ENCODE measurements at regions of chr19 and their contacts with region 1.

Region 1: DNA sequence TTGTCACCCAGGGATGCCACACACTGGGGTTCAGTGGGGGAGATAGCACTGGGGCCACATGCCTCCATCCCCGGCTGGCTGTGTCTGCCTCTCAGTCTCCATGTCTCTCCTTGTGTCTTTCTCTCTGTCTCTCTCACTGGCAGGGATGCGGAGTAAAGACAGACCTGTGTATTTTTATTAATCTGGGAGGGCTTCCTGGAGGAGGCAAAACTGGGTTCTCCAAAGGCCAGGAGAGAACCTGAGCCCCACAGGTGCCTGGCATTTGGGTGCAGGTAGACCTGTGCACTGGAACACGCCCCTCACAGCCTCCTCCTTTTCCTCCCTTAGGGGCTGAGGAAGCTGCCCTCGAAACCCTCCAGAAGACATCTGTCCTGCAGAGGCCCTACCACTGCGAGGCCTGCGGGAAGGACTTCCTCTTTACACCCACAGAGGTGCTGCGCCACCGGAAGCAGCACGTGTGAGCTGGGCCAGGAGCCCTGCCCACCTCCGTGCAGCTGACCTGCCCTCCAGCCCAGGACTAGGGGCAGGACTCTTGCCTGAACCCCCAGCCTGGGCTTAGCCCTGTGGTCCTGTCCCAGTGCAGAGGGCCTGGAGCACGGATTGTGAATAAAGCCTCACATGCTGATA is 32.7 kb downstream of the DHX34 start:
- DNase-seq: peak in 1 of 4 donors; percentile 17
- ATAC-seq: no peak
- H3K4me3 ChIP-seq: no peak overlapping the region
- H3K27ac ChIP-seq: no peak overlapping the region
- H3K4me1 ChIP-seq: no peaks in the 10 kb centered on the region
- H3K27me3 ChIP-seq: no peaks in the 10 kb centered on the region
- CTCF ChIP-seq: no peak
- POLR2A ChIP-seq: no peak

Region 2: DNA sequence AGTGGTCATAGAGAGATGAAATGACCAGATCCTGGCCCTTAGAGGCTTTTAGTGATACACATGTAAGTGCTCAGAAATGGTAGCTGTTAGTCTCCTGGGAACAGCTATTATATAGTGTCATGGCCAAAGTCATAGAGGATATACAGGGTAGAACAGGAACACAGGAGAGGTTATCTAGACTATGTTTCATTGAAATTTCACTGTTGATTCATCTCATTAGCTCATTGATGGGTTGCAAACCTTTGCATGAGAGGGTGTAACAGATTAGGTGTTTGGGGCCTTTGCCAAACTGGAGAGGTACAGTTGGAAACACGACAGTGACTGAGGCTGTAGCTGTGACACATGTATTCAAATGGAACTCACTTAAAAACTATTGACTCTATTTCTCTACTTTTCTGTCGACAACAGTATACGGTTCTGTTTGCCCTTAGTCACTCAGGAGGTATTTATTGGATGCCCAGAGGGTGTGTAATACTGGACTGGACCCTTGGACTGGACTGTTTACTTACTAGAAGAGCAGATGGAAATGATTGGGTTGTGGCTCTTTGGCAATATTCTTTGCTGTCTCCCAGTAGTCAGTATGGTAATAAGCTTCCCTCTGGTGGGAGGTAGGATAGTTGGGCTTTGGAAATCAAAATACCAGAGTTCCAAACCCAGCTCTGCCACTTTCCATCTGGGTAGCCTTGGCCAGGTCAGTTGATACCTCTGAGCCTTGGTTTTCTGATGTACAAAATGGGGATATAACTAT is 491.2 kb before region 1 on chr19:
- intact Hi-C with region 1: no loop called
- DNase-seq: peak in 3 of 4 donors; percentile 13 to 33 (median 28)
- ATAC-seq: peak; percentile 78
- H3K4me3 ChIP-seq: no peak overlapping the region
- H3K27ac ChIP-seq: peak overlapping the region in 2 of 4 donors; percentile 17 to 34
- H3K4me1 ChIP-seq: peaks cover 10% of the 10 kb centered on the region
- H3K27me3 ChIP-seq: no peaks in the 10 kb centered on the region
- CTCF ChIP-seq: no peak
- POLR2A ChIP-seq: no peak

Region 3: GRCh38 chr19:47231215-47231984 is 150.4 kb before region 1 on chr19:
- intact Hi-C with region 1: no loop called
- DNase-seq: peak; percentile 90 to 94 (median 93)
- ATAC-seq: peak; percentile 68
- H3K4me3 ChIP-seq: no peak overlapping the region
- H3K27ac ChIP-seq: peak overlapping the region; percentile 75 to 97 (median 93)
- H3K4me1 ChIP-seq: peaks cover 53% of the 10 kb centered on the region
- H3K27me3 ChIP-seq: no peaks in the 10 kb centered on the region
- CTCF ChIP-seq: no peak
- POLR2A ChIP-seq: peak in 2 of 3 donors; percentile 75 to 80

Region 4: GRCh38 chr19:47296036-47296435 is 85.7 kb before region 1 on chr19:
- intact Hi-C with region 1: loop called (anchors 10 kb)
- DNase-seq: peak; percentile 78 to 88 (median 82)
- ATAC-seq: peak; percentile 87
- H3K4me3 ChIP-seq: no peak overlapping the region
- H3K27ac ChIP-seq: no peak overlapping the region
- H3K4me1 ChIP-seq: no peaks in the 10 kb centered on the region
- H3K27me3 ChIP-seq: no peaks in the 10 kb centered on the region
- CTCF ChIP-seq: peak; percentile 49 to 78 (median 72)
- POLR2A ChIP-seq: no peak